Activated CD4-positive, alpha-beta memory T cell treated with anti-CD3 and anti-CD28 coated beads, Interleukin-2, amount 10 ng/mL, durations not matched to agents 7 days and 5 days (primary cell): ENCODE measurements at regions of chr22 and their contacts with region 1.

Region 1: DNA sequence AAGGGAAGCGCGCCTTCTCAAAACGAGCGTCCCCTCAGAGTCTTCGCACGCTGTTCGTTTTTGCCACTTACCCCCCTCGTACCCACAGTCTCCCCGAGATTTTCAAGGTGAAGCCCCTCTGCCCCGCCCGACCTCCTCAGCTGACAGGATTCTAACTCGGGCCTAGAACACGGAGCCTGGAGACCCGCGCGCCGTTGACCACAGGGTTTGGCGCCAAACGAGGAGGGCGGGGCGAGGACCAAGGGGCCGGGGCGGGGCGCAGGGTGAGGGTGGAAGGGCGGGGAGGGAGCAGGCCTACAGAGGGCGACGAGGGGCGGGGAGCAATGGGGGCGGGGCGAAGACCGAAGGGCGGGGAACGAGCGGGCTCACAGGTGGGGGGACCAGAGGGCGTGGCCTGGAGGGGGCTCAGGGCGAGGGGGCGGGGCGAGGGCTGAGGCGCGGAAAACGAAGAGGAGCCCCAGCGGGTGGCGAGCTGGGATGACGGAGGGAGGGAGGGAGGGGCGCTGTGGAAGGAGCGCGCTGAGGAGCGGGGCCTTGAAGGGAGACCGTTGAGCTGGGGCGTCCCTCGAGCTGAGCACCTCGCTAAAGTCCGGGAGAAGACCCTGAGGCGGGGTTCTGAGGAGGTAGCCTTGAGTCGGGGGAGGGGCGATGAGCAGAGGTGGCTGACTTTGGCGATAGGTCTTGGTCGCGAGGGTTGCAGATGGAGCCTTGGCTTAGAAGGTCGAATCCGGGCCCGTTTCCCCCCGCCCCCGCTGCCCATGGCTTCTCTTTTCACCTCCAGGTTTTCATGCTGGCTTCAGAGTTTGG is at the start of gene DMC1:
- DNase-seq: peak; percentile 98
- H3K4me3 Mint-ChIP-seq: peak within 1 kb of the TSS; percentile 89
- H3K27ac Mint-ChIP-seq: peak within 1 kb of the TSS; percentile 93
- H3K4me1 Mint-ChIP-seq: peaks cover 23% of the 10 kb centered on the region
- H3K27me3 Mint-ChIP-seq: peaks cover 2% of the 10 kb centered on the region
- total RNA-seq, gene DMC1: 12.5 to 12.6 TPM

Region 2: GRCh38 chr22:38481162-38481870 is 88.9 kb before region 1 on chr22:
- CTCF ChIA-PET with region 1: no interaction called
- POLR2A ChIA-PET with region 1: interaction called, 18 read pairs
- DNase-seq: no peak
- H3K4me3 Mint-ChIP-seq: no peak overlapping the region
- H3K27ac Mint-ChIP-seq: peak overlapping the region; percentile 33
- H3K4me1 Mint-ChIP-seq: peaks cover 7% of the 10 kb centered on the region
- H3K27me3 Mint-ChIP-seq: no peaks in the 10 kb centered on the region

Region 3: GRCh38 chr22:38524429-38524828 is 45.7 kb before region 1 on chr22:
- CTCF ChIA-PET with region 1: no interaction called
- POLR2A ChIA-PET with region 1: no interaction called
- DNase-seq: no peak
- H3K4me3 Mint-ChIP-seq: no peak overlapping the region
- H3K27ac Mint-ChIP-seq: no peak overlapping the region
- H3K4me1 Mint-ChIP-seq: peaks cover 2% of the 10 kb centered on the region
- H3K27me3 Mint-ChIP-seq: no peaks in the 10 kb centered on the region

Region 4: GRCh38 chr22:38601221-38601764 is 31.1 kb after region 1 on chr22:
- CTCF ChIA-PET with region 1: no interaction called
- POLR2A ChIA-PET with region 1: no interaction called
- DNase-seq: no peak
- H3K4me3 Mint-ChIP-seq: no peak overlapping the region
- H3K27ac Mint-ChIP-seq: no peak overlapping the region
- H3K4me1 Mint-ChIP-seq: no peaks in the 10 kb centered on the region
- H3K27me3 Mint-ChIP-seq: peaks cover 13% of the 10 kb centered on the region

Region 5: GRCh38 chr22:38614332-38615063 is 44.3 kb after region 1 on chr22:
- CTCF ChIA-PET with region 1: no interaction called
- POLR2A ChIA-PET with region 1: no interaction called
- DNase-seq: no peak
- H3K4me3 Mint-ChIP-seq: no peak overlapping the region
- H3K27ac Mint-ChIP-seq: no peak overlapping the region
- H3K4me1 Mint-ChIP-seq: no peaks in the 10 kb centered on the region
- H3K27me3 Mint-ChIP-seq: peaks cover 3% of the 10 kb centered on the region

Region 6: GRCh38 chr22:38649841-38650522 is 79.8 kb after region 1 on chr22:
- CTCF ChIA-PET with region 1: no interaction called
- POLR2A ChIA-PET with region 1: no interaction called
- DNase-seq: no peak
- H3K4me3 Mint-ChIP-seq: no peak overlapping the region
- H3K27ac Mint-ChIP-seq: no peak overlapping the region
- H3K4me1 Mint-ChIP-seq: peaks cover 4% of the 10 kb centered on the region
- H3K27me3 Mint-ChIP-seq: no peaks in the 10 kb centered on the region